ENCODE measurements at regions of chr3 and their contacts with region 1.

Region 1: DNA sequence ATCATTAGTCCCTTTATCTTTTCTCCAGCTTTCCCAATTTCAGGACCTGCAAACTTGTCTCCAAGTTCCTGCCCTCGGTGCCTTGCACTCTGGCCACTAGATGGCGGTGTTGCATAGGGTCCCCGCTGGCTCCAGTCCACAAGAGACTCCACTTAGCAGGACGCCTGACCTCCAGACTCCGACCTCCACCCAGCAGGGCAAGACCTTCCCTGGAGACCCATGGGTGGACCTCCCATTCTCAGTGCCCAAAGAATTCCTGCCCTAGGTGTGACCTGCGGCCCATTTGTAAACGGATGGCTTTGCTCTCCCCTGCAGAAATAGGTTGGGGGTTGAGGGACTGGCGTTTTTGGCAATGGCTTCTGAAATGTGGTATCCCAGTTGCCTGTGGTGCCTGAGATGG is 82.6 kb downstream of the LSM3 start:
- DNase-seq: peak; percentile 80 to 94 (median 86)
- H3K4me3 ChIP-seq: no peak overlapping the region
- H3K27ac ChIP-seq: no peak overlapping the region
- H3K4me1 ChIP-seq: no peaks in the 10 kb centered on the region
- H3K27me3 ChIP-seq: no peaks in the 10 kb centered on the region
- CTCF ChIP-seq: peak; percentile 92 to 98 (median 96)
- POLR2A ChIP-seq: no peak

Region 2: GRCh38 chr3:14203521-14204079 is 57.6 kb before region 1 on chr3:
- intact Hi-C with region 1: loop called in 1 of 2 experiments (anchors 10 kb)
- DNase-seq: peak; percentile 72 to 90 (median 80)
- H3K4me3 ChIP-seq: no peak overlapping the region
- H3K27ac ChIP-seq: peak overlapping the region in 4 of 5 donors; percentile 80 to 98 (median 88)
- H3K4me1 ChIP-seq: peaks cover 14 to 29% of the 10 kb centered on the region in 2 donors
- H3K27me3 ChIP-seq: no peaks in the 10 kb centered on the region
- CTCF ChIP-seq: peak; percentile 84 to 94 (median 90)
- POLR2A ChIP-seq: no peak

Region 3: DNA sequence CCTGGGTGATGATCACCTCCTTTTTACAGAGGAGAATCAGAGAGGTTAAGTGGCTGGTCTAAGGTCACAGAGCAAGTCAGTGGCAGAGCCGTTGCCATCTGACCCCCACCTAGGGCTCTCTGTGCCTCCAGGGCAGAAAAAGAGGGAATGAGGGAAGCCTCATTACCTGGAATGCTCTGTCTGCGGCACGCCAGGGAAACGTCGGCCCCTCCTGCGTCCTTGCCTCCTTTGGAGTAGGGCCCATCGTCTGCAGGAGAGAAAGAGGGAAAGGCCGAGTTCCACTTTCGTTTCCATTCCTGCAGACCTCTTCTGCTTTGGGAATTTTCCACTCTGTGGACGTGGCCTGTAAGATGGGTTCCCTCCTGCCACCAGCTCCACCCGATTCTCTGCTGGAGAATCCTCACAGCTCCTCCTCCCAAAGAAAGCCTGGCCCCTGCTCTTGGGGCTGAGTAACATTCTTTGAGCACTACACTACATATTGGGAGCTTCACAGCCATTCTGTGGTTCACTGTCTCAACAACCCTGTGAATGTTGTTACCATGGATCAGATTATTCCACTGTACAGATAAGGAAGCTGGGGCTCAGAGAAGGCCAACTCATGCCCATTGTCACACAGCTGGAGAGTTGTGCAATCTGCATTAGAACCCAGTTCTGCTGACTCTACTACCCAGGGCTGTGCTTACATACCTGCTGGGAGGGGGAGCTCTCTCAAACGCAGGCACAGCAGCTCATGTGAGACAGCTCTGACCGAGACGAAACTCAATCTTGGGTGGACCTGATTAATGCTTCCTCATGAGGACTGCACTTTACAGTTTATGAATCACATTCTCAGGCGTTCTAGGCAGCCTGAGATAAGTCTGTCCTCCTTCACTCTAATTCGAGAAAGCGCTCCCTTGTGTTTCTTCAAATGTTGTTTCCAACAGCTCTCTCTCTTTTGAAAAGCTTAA is 264.7 kb after region 1 on chr3:
- intact Hi-C with region 1: no loop called
- DNase-seq: peak in 6 of 7 donors; percentile 46 to 68 (median 50)
- H3K4me3 ChIP-seq: peak overlapping the region in 1 of 4 donors; percentile 13
- H3K27ac ChIP-seq: peak overlapping the region in 2 of 5 donors; percentile 53 to 77
- H3K4me1 ChIP-seq: peaks cover 0 to 14% of the 10 kb centered on the region in 2 donors
- H3K27me3 ChIP-seq: no peaks in the 10 kb centered on the region
- CTCF ChIP-seq: no peak
- POLR2A ChIP-seq: no peak

Region 4: DNA sequence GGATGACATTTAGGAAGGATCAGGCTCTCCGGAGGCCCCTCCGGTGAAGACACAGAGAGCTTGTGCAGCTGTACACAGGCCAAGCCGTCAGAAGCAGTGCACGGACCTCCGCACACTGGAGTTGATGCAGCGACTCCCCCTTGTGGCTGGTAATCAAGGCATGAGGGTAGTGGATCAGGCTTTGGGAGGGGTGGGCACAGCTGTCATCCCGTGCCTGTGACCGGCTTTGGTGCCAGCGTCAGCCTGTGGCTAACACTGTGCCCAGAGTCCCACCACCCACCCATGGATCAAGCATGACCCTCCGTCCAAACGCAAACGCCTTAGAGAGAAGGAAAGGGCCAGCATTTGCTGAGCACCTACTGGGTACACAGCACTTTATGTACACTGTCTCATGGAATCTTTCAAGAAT is 287.1 kb after region 1 on chr3:
- intact Hi-C with region 1: loop called in 1 of 2 experiments (anchors 5 kb)
- DNase-seq: peak; percentile 55 to 83 (median 79)
- H3K4me3 ChIP-seq: no peak overlapping the region
- H3K27ac ChIP-seq: no peak overlapping the region
- H3K4me1 ChIP-seq: no peaks in the 10 kb centered on the region
- H3K27me3 ChIP-seq: no peaks in the 10 kb centered on the region
- CTCF ChIP-seq: peak; percentile 53 to 78 (median 66)
- POLR2A ChIP-seq: no peak